Spleen (tissue), 13 donors: ENCODE measurements at regions of chr10 and their contacts with region 1.

Region 1: GRCh38 chr10:96513698-96514561 is at the start of gene TLL2:
- DNase-seq: peak; percentile 93
- H3K4me3 ChIP-seq: peak within 1 kb of the TSS; percentile 46 to 72 (median 58)
- H3K27ac ChIP-seq: peak within 1 kb of the TSS in 4 of 8 donors; percentile 37 to 58 (median 40)
- H3K4me1 ChIP-seq: peaks cover 19 to 32% (median 24%) of the 10 kb centered on the region in 6 donors
- H3K27me3 ChIP-seq: peaks cover 0 to 44% (median 20%) of the 10 kb centered on the region in 7 donors
- CTCF ChIP-seq: peak; percentile 50 to 86 (median 73)
- POLR2A ChIP-seq: no peak
- total RNA-seq, gene TLL2: 0.26 to 0.75 (median 0.34) TPM

Region 2: DNA sequence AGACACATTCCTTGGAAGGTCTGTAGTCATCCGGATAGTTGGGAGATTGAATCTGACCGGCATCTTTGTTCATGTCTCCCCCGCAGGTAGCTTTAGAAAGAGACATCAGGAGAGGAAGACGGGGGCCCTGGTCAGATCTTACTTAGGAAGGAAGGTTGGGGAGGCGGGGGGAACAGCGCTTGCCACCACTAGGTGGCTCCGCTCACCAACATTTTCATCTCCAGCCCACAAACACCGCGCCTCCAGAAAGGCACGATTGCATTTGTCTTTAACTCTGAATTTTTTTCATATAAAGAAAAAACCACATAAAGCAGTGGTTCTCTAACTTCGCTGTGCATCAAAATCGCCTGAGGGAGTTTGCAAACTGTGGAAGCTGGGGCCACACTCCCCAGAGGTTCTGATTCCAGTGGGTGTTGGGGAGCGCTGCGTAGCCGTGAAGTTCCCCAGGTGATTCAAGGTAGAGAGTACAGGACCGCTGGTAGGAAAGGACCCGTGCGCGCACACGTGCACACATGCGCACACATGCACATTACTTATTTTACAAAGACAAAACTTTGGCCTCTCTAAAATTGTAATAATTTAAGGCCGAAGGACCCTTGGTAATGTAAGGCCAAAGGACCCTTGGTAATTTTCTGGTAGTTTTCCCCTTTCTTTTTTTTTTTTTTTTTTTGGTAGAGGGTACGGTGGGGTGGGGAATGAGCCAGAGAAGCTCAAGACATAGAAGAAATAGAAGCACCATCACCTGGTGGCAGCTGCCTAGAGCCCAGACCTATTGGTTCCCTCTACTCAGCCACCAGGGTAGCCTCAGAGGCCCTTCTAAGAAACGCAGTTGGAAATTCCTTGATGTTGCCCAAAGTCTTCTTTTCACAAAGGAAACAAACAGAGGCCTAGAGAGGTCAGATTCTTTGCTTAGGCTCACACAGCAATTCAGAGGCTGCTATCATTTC is 117.7 kb before region 1 on chr10:
- intact Hi-C with region 1: loop called (anchors 5 kb)
- DNase-seq: peak; percentile 86
- H3K4me3 ChIP-seq: no peak overlapping the region
- H3K27ac ChIP-seq: no peak overlapping the region
- H3K4me1 ChIP-seq: peaks cover 0 to 8% (median 6%) of the 10 kb centered on the region in 6 donors
- H3K27me3 ChIP-seq: peaks cover 0 to 53% (median 0%) of the 10 kb centered on the region in 7 donors
- CTCF ChIP-seq: peak; percentile 69 to 95 (median 83)
- POLR2A ChIP-seq: no peak